Right ventricle myocardium inferior (tissue), 1 donor: ENCODE measurements at regions of chr1 and their contacts with region 1.

Region 1: GRCh38 chr1:56508523-56508983 is 70.8 kb downstream of the PLPP3 start:
- DNase-seq: peak; percentile 84
- ATAC-seq: peak; percentile 84

Region 2: GRCh38 chr1:56376188-56376984 is 132.2 kb before region 1 on chr1:
- intact Hi-C with region 1: loop called (anchors 5 kb)
- DNase-seq: peak; percentile 62
- ATAC-seq: peak; percentile 39

Region 3: DNA sequence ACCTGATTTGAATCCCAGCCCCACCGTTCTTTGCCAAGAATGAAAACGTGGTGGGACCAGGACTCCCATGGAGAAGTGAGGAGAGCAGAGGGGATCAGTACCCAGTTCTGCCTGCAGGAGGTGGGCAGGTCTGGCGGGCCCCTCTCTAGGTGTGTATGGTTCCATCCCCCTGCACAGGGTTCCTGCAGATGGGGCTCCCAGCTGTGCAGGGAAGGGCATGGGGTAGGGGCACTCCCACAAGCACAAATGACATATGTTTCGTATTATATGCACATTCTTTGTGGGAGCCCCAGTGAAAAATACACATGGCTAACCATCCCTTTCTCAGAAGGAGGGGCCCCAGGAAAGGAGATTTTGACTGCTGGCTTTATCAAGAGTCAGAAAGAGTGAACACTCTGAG is 73.8 kb before region 1 on chr1:
- intact Hi-C with region 1: loop called (anchors 5 kb)
- DNase-seq: no peak
- ATAC-seq: no peak

Region 4: DNA sequence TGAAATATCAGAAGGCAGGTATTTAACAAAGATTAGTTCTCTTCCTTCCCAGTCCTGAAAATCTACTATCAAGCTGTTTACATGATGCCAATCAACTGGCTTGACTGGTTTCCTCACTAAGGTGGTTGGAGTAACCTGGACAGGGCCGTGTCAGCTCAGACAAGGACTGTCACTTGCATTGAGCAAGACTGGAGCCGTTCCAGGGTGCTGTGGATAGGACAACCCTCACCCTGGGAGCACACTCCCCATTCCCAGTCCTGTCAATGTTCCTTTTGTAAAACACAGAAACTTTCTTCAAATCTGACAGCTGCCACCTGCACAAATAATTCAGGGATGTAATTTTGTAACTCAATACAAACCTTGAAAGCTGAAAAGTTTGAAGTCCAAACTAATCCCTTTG is 39.4 kb after region 1 on chr1:
- intact Hi-C with region 1: loop called (anchors 5 kb)
- DNase-seq: no peak
- ATAC-seq: peak; percentile 47